Activated CD4-positive, alpha-beta T cell treated with anti-CD3 and anti-CD28 coated beads for 36 hours (primary cell): ENCODE measurements at regions of chr1 and their contacts with region 1.

Region 1: GRCh38 chr1:163315773-163316374 is 5.9 kb upstream of the NUF2 start:
- DNase-seq: peak; percentile 69
- ATAC-seq: no peak
- H3K4me3 Mint-ChIP-seq: no peak overlapping the region
- H3K27ac Mint-ChIP-seq: no peak overlapping the region
- H3K4me1 Mint-ChIP-seq: peaks cover 4% of the 10 kb centered on the region
- H3K27me3 Mint-ChIP-seq: no peaks in the 10 kb centered on the region

Region 2: DNA sequence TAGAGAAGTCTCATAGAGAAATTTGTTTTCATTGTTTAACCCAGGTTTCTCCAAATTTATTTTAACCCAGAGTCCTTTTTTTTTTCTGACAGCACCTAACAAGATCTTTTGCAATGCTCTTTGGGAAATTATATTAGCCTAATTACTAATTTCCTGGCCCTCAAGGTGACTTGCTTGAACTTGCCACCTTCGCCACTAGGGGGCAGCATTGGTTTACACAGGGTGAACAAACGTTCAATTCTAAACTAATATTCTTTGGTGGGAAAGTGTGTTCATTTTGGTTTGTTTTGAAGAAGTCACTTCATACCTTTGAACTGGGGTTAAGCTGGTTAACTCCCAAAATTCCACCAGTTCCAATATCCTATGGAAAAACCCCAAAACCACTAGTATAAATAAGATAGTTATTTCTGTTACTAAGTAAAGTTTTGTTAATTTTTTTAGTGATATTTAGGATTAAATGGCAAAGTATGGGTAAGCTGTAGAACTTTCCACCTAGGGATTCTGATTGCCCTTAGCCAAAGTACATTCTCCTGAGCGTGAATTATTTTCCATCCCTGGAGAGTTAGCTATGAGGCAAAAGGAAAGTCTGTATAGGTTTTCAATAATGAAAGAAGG is 467.9 kb before region 1 on chr1:
- CTCF ChIA-PET with region 1: interaction called, 28 read pairs
- POLR2A ChIA-PET with region 1: no interaction called
- intact Hi-C with region 1: loop called in 1 of 2 experiments (anchors 1 kb)
- DNase-seq: peak; percentile 89
- ATAC-seq: no peak
- H3K4me3 Mint-ChIP-seq: no peak overlapping the region
- H3K27ac Mint-ChIP-seq: no peak overlapping the region
- H3K4me1 Mint-ChIP-seq: no peaks in the 10 kb centered on the region
- H3K27me3 Mint-ChIP-seq: peaks cover 4% of the 10 kb centered on the region

Region 3: DNA sequence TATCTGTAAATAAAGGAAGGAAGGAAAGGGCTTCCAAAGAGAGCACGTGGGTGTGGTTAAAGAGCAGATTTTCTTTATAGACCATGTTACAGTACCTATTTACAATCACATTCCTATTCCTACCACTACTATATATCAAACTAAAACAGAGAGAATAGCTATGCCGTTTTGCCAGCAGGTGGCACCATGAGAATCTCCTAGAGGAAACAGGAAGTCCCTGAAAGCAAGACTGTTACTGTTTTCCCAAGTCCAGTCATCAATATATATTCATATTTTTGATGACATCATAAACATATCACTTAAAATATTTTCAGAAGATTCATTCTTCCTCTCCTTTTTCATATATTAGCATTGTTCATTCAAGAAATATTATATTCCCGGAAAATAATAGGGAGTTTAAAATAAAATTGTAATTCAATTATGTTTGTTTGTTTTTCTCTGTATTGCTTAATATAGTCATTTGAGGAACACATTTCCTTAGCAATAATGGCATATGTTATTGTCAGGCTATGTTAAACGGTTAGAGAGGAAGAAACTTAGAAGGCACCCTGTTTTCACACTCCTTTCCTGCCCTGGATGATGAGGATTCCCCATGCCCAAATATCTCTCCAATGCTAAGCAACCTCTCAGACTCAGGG is 461.5 kb before region 1 on chr1:
- CTCF ChIA-PET with region 1: interaction called, 28 read pairs
- POLR2A ChIA-PET with region 1: no interaction called
- intact Hi-C with region 1: loop called (anchors 1 kb)
- DNase-seq: peak; percentile 71
- ATAC-seq: peak; percentile 58
- H3K4me3 Mint-ChIP-seq: no peak overlapping the region
- H3K27ac Mint-ChIP-seq: no peak overlapping the region
- H3K4me1 Mint-ChIP-seq: no peaks in the 10 kb centered on the region
- H3K27me3 Mint-ChIP-seq: peaks cover 1% of the 10 kb centered on the region

Region 4: GRCh38 chr1:162878000-162878596 is 437.8 kb before region 1 on chr1:
- CTCF ChIA-PET with region 1: interaction called, 3 read pairs
- POLR2A ChIA-PET with region 1: no interaction called
- intact Hi-C with region 1: loop called (anchors 1 to 2 kb)
- DNase-seq: peak; percentile 64
- ATAC-seq: no peak
- H3K4me3 Mint-ChIP-seq: no peak overlapping the region
- H3K27ac Mint-ChIP-seq: no peak overlapping the region
- H3K4me1 Mint-ChIP-seq: no peaks in the 10 kb centered on the region
- H3K27me3 Mint-ChIP-seq: peaks cover 39% of the 10 kb centered on the region

Region 5: GRCh38 chr1:163071405-163072255 is 244.2 kb before region 1 on chr1:
- CTCF ChIA-PET with region 1: interaction called, 15 read pairs
- POLR2A ChIA-PET with region 1: no interaction called
- intact Hi-C with region 1: loop called (anchors 1 kb)
- DNase-seq: peak; percentile 67
- ATAC-seq: peak; percentile 26
- H3K4me3 Mint-ChIP-seq: no peak overlapping the region
- H3K27ac Mint-ChIP-seq: no peak overlapping the region
- H3K4me1 Mint-ChIP-seq: peaks cover 2% of the 10 kb centered on the region
- H3K27me3 Mint-ChIP-seq: peaks cover 42% of the 10 kb centered on the region